GM23248 (cell line): ENCODE measurements at regions of chr2 and their contacts with region 1.

Region 1: GRCh38 chr2:147989809-147990403 is 30.6 kb downstream of the ORC4 start:
- DNase-seq: peak; percentile 78
- H3K4me3 ChIP-seq: no peak overlapping the region
- H3K27ac ChIP-seq: no peak overlapping the region
- H3K4me1 ChIP-seq: 0 out of 2 replicates have a peak, but pooled peaks cover 4% of the 10 kb centered on the region
- H3K27me3 ChIP-seq: no peaks in the 10 kb centered on the region

Region 2: DNA sequence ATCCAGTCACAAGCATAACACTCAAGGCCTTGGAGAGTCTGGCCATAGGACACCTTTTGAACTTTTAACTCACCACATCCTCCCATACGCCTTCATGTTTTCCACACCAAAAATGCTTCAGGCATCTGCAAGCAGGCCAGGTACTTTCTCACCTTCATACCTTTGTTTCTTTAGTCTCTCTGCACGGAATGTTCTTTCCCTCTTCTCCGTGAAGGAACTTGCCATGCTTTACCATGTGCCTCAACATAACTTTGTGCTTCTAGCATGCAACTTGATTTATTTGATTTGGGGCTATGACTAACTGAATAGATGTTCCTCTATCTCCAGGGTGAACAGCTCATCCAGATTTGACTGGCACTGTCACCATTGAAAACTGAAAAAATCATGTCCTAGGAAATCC is 286.7 kb before region 1 on chr2:
- in situ Hi-C with region 1: no loop called
- DNase-seq: no peak
- H3K4me3 ChIP-seq: no peak overlapping the region
- H3K27ac ChIP-seq: no peak overlapping the region
- H3K4me1 ChIP-seq: no peaks in the 10 kb centered on the region
- H3K27me3 ChIP-seq: 0 out of 2 replicates have a peak, but pooled peaks cover 14% of the 10 kb centered on the region

Region 3: GRCh38 chr2:148238561-148238960 is 248.7 kb after region 1 on chr2:
- in situ Hi-C with region 1: no loop called
- DNase-seq: peak; percentile 60
- H3K4me3 ChIP-seq: peak overlapping the region; percentile 28
- H3K27ac ChIP-seq: peak overlapping the region; percentile 32
- H3K4me1 ChIP-seq: peaks cover 20% of the 10 kb centered on the region
- H3K27me3 ChIP-seq: no peaks in the 10 kb centered on the region

Region 4: GRCh38 chr2:148519013-148519412 is 529.1 kb after region 1 on chr2:
- in situ Hi-C with region 1: loop called (anchors 10 kb)
- DNase-seq: no peak
- H3K4me3 ChIP-seq: no peak overlapping the region
- H3K27ac ChIP-seq: no peak overlapping the region
- H3K4me1 ChIP-seq: peaks cover 3% of the 10 kb centered on the region; the same call in 1 of the 2 replicates
- H3K27me3 ChIP-seq: no peaks in the 10 kb centered on the region

Region 5: DNA sequence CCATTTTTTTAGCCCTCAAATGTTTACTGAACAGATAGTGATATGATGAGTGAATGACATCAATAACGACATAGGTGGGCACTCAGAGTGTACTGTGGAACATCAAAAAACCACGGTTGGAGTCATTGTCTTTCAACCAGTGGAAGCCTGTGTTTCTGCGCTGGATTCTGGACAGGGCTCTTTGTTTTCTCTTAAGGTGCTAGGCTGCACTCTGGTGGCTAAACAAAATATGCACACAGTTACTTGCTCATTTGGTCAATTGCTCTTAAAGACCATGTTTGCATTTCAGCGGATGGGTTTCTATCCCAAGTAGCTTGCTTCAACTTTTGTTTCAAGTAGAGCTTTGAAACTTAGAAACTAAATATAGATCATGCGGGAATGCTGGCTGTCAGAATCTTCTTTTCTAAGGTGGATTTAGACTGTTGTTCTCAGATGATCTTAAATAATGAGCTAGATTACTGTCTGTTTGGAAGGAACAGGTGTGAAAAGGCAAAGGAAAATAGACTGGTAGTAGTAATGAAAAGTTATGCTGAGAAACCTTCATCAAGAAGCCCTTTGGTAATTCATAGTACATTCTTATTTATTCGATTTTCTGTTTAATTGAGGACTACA is 1000.1 kb after region 1 on chr2:
- in situ Hi-C with region 1: loop called (anchors 25 kb)
- DNase-seq: peak; percentile 87
- H3K4me3 ChIP-seq: no peak overlapping the region
- H3K27ac ChIP-seq: no peak overlapping the region
- H3K4me1 ChIP-seq: no peaks in the 10 kb centered on the region; the same call in 1 of the 2 replicates
- H3K27me3 ChIP-seq: peaks cover 8% of the 10 kb centered on the region; the same call in 1 of the 2 replicates

Region 6: DNA sequence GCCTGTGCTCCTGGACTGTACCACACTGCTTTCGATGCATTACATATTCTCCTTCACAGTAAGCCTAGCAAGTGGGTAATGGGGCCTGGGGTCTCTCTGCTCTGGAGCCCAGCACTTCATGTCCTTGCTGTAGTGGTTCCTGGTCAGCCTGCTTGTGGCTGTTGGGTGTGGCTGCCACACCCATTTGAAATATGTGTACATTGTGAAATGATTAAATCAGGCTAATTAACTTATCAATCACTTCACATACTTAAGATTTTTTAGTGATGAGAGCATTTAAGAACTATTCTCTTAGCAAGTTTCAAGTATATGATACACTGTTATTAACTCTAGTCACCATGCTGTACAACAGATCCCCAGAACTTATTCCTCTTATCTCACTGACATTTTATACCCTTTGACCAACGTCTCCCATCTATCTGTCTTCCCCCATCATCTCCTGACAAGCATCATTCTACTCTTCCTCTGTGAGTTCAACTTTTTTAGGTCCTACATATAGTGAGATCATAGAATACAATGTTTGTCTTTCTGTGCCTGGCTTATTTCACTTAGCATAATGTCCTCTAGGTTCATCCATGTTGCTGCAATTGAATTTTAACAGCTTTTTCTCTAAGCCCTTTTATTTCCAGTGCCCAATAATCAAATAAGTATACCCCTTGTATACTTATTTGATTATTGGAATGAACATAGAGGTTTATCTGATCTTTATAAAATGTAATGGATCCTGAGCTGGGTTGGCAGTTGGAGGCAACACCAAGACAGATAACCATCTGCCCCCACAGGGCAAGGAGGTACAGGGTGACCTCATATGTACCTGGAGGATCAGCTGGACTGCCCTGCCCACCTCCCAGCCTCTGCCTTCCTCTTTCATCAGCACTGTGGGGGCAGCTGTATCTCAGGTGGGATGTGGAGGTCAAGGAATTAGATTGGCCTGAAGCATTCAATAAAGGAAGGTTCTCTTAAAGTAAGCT is 1432.7 kb after region 1 on chr2:
- in situ Hi-C with region 1: no loop called
- DNase-seq: peak; percentile 40
- H3K4me3 ChIP-seq: no peak overlapping the region; the same call in 1 of the 2 replicates
- H3K27ac ChIP-seq: peak overlapping the region; percentile 18; the same call in 1 of the 2 replicates
- H3K4me1 ChIP-seq: peaks cover 14% of the 10 kb centered on the region
- H3K27me3 ChIP-seq: no peaks in the 10 kb centered on the region